ENCODE measurements at regions of chr22 and their contacts with region 1.

Region 1: GRCh38 chr22:28379075-28379779 is 300.4 kb downstream of the TTC28 start:
- DNase-seq: no peak
- H3K4me3 Mint-ChIP-seq: no peak overlapping the region
- H3K27ac Mint-ChIP-seq: no peak overlapping the region
- H3K4me1 Mint-ChIP-seq: peaks cover 14% of the 10 kb centered on the region
- H3K27me3 Mint-ChIP-seq: no peaks in the 10 kb centered on the region

Region 2: GRCh38 chr22:28120691-28121592 is 258.3 kb before region 1 on chr22:
- intact Hi-C with region 1: no loop called
- DNase-seq: no peak
- H3K4me3 Mint-ChIP-seq: no peak overlapping the region
- H3K27ac Mint-ChIP-seq: no peak overlapping the region
- H3K4me1 Mint-ChIP-seq: no peaks in the 10 kb centered on the region
- H3K27me3 Mint-ChIP-seq: peaks cover 2% of the 10 kb centered on the region

Region 3: DNA sequence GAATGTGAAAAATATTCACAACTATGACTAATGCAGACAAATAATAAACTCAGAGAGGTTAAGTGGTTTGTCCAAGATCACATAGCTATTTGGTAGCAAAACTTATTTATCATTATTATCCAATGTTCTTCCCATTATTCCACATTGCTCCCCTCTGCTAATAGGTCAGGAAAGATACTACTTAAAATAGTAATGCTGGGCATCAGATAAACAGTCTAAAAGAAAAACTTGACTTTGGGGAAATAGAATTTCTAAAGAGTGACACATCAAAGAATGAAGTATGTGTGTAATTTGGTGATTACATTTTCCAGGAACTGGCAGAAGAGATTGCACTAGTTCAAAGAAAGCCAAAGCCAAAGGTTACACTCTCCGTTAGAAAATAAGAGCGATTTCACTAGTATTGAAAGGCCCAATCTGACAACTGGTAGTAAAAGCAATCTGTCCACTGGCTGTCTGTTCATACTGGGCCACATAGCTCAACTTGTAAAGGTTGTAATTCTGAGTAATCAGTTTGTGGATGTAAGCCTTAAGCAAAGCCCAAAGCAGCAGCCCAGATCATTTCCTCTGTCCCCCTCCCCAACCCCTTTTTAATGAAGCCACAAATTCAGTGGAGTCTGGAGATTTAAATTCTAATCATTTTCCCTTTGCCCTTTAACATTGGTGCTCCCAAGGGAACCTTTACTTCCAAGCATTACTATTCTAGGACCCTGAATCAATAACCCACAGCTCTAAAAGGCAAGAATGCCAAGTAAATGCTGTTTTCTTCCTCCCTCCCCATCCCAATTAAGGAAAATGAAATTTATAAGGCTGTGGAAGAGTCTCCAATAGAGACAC is 16.9 kb after region 1 on chr22:
- intact Hi-C with region 1: loop called (anchors 1 kb)
- DNase-seq: peak; percentile 68
- H3K4me3 Mint-ChIP-seq: peak overlapping the region; percentile 8
- H3K27ac Mint-ChIP-seq: peak overlapping the region; percentile 75
- H3K4me1 Mint-ChIP-seq: peaks cover 38% of the 10 kb centered on the region
- H3K27me3 Mint-ChIP-seq: peaks cover 1% of the 10 kb centered on the region

Region 4: DNA sequence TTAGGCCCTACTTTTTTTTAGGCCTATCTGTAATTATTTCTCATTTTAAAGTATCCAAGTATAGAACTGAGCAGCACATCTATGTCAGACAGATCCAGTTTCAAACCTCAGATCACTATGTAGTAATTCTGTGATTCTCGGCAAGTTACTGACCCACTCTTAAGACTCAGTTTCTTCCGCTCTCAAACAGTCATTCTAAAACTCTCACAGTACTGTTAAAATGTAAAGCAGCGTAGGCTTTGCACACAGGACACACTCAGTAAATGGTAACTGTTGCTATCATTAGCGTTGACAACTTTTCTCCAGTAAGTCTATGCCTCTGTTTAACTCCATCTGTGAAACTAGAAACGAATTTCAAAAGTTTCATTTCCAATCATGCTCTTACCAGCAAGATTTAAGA is 23.3 kb after region 1 on chr22:
- intact Hi-C with region 1: loop called (anchors 1 kb)
- DNase-seq: no peak
- H3K4me3 Mint-ChIP-seq: peak overlapping the region; percentile 39
- H3K27ac Mint-ChIP-seq: peak overlapping the region; percentile 80
- H3K4me1 Mint-ChIP-seq: peaks cover 32% of the 10 kb centered on the region
- H3K27me3 Mint-ChIP-seq: peaks cover 1% of the 10 kb centered on the region

Measured in activated CD4-positive, alpha-beta T cell treated with anti-CD3 and anti-CD28 coated beads, Interleukin-2, amount 10 ng/mL, durations not matched to agents 24 days and 14 days (primary cell).